ENCODE measurements at regions of chr7 and their contacts with region 1.

Region 1: DNA sequence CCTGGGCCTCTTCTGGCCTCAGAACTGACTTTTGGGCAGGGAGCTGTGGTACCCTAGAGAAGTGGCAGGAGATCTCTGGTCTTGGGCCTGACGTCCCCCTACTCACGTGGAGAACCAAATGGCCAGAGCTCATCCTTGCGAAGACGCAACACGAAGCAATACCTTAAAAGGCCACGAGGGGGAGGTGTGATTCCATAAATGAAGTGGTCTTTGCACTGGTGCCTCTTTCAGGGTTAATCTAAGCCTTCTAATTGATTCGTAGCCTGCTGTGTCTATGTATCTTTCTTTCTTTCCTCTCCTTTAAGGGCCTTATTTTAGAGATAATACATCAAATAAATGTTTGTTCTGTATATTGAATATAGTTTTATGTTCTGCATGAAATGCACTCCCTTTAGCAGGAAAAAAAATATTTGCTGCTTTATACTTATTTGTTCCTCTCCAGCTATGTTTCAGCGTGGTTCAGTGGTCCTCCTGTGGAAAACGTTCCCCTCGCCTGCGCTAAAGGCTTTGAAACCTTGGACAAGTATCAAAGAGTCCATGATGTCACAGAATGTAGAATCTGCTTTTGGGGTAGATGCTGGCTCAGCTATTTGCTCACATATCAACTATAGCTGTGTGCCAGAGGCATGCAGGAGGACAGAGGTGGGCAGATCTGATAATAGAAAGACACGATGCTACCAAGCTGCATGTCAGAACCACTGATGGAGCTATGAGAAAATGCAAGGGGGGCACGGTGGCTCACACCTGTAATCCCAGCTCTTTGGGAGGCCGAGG is 41.0 kb downstream of the STRA8 start:
- H3K4me3 ChIP-seq: no peak overlapping the region
- H3K27ac ChIP-seq: no peak overlapping the region
- H3K4me1 ChIP-seq: no peaks in the 10 kb centered on the region
- CTCF ChIP-seq: no peak

Region 2: GRCh38 chr7:135186841-135187253 is 87.8 kb before region 1 on chr7:
- CTCF ChIA-PET with region 1: no interaction called
- POLR2A ChIA-PET with region 1: no interaction called
- H3K4me3 ChIP-seq: no peak overlapping the region
- H3K27ac ChIP-seq: no peak overlapping the region
- H3K4me1 ChIP-seq: no peaks in the 10 kb centered on the region
- CTCF ChIP-seq: no peak

Region 3: GRCh38 chr7:135291809-135292253 is 17.1 kb after region 1 on chr7:
- CTCF ChIA-PET with region 1: interaction called, 10 read pairs
- POLR2A ChIA-PET with region 1: no interaction called
- H3K4me3 ChIP-seq: no peak overlapping the region
- H3K27ac ChIP-seq: no peak overlapping the region
- H3K4me1 ChIP-seq: no peaks in the 10 kb centered on the region
- CTCF ChIP-seq: no peak

Region 4: DNA sequence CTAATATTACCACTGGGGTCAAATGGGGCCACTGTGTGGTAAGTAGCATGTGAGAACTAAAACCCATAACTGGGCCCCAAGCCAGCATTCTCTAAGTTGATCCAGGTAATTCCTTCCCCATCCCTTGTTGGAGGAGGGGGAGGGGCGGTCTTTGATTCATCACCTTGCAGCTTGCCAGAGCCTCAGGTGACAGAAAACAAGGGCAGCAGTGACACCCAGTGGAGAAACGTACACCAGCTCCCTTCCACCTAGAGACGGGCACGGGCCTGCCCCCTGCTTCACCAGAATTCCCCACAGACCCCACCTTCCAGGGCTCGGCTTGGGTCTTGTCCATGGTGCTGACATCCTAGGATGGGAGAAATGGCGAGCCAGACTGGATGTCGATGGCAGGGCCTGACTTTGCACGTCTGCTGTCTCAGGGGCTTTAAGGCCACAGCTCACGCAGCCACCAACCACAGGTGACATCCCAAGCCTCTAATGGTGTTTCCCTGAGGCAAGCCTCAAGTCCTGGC is 61.0 kb after region 1 on chr7:
- CTCF ChIA-PET with region 1: interaction called, 110 read pairs
- POLR2A ChIA-PET with region 1: interaction called, 3 read pairs
- H3K4me3 ChIP-seq: no peak overlapping the region
- H3K27ac ChIP-seq: no peak overlapping the region
- H3K4me1 ChIP-seq: no peaks in the 10 kb centered on the region
- CTCF ChIP-seq: peak; percentile 84

Measured in HEK293 (cell line).